HepG2 (cell line): ENCODE measurements at regions of chr3 and their contacts with region 1.

Region 1: DNA sequence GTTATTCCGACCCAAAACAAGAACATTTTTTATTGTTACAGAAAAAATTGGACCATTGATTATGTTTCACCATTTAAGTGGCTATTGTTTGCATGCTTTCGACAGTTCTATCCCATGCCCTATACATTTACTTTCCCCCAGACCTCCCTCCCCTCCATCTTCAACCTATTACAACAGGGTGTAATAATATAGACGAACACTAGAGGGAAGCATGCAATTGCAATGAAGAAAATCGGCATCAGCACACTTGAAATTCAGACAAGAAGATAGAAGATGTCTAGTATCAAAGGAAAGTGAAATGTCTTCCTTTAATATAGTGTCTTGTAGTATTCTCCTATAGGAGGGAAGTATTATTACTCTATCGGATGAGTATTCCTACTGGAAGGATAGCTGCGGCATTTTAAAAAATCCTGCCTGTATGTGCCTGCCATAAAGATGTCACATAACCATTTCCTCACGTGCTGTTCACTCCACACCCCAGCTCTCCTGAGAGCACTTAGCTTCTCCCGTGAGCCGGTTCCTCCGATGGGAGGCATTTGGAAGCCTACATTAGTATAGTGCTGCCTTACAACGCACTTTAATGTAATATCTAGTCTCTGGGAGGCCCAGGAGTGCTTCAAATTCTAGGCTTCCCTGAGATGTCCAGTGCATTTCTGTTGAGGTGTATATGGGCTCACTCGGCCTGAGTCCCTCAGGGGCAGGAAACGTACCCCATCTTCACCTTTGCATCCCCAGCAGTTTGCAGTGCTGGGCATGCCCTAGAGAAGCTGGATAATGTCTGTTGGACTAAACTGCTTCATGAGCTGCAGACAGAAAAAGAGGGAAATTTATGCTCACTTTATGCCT is 17.8 kb upstream of the ERICH6 start:
- DNase-seq: peak; percentile 67
- ATAC-seq: peak; percentile 79
- H3K4me3 ChIP-seq: no peak overlapping the region
- H3K27ac ChIP-seq: peak overlapping the region; percentile 28
- H3K4me1 ChIP-seq: peaks cover 42% of the 10 kb centered on the region
- H3K27me3 ChIP-seq: no peaks in the 10 kb centered on the region
- CTCF ChIP-seq: peak; percentile 91
- EP300 ChIP-seq: no peak
- POLR2A ChIP-seq: no peak
- RAD21 ChIP-seq: peak; percentile 86

Region 2: DNA sequence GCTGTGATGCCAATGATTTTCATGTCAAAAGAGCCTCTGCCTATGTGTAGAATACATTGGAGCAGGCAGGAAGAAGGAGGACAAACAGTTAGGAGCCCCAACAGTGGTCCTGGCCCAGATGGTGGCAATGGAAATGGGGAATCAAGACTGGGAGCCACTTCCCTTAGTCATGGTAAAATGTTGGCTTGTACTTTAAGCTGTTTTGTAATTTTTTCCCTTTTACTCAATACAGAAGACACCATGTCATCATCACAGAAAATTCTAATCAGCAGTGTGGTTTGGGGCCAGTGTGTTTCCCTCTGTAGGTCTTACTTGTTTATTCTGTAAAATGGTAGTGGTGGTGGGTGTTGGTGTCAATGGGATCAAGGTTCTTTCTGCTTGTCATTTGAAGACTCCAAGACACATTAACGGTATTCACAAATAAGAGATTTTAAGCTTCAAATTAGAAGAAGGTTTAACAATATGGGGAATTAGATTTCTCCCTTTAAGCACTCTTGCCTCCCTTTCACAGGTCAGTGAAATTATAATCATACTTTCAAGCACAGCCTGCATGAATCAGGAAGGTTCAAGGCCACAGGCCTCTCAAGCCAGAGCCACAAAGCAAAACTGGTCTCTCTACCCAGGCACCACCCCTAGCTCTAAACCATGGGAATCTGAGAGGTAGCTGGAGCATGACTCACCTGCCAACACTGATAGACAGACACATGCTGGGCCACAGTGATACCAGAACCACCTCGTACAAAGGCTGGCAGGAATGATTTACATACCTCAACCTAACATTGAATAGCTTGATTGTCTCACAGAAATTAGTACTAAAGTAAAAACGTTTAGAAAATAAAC is 16.6 kb after region 1 on chr3:
- CTCF ChIA-PET with region 1: no interaction called
- POLR2A ChIA-PET with region 1: interaction called, 6 read pairs
- in situ Hi-C with region 1: no loop called
- intact Hi-C with region 1: loop called (anchors 1 kb)
- DNase-seq: peak; percentile 96
- ATAC-seq: peak; percentile 73
- H3K4me3 ChIP-seq: peak overlapping the region in 1 of 3 experiments; percentile 38; a peak in 1 of 6 replicates
- H3K27ac ChIP-seq: peak overlapping the region; percentile 99
- H3K4me1 ChIP-seq: peaks cover 100% of the 10 kb centered on the region
- H3K27me3 ChIP-seq: no peaks in the 10 kb centered on the region
- CTCF ChIP-seq: no peak
- EP300 ChIP-seq: peak; percentile 41 to 90; a peak in 3 of 4 replicates
- POLR2A ChIP-seq: no peak; a peak in 1 of 4 replicates
- RAD21 ChIP-seq: 0 out of 2 replicates have a peak, but pooled peaks have one; percentile 12

Region 3: DNA sequence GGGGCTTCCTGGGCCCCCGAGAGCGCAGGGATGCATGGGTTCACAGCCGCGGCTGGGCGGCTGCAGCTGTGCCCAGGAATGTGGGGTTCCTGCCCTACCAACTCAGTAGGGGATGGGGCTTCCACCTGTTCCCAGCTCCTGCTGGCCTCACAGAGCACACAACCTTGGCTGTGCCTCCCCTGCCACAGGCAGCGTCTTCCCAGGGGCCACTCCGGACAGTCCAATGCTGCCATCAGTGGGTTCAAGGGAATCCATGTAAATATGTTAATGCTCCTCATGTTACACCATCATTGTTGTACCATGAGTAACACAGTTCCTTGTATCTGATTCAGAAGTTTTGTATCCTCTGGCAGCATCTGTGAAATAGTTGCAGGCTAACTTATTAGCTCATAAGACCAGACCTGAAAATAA is 53.6 kb after region 1 on chr3:
- CTCF ChIA-PET with region 1: interaction called, 21 read pairs
- POLR2A ChIA-PET with region 1: interaction called, 8 read pairs
- in situ Hi-C with region 1: loop called (anchors 10 kb)
- intact Hi-C with region 1: loop called (anchors 1 kb)
- DNase-seq: no peak
- ATAC-seq: no peak
- H3K4me3 ChIP-seq: no peak overlapping the region
- H3K27ac ChIP-seq: no peak overlapping the region
- H3K4me1 ChIP-seq: peaks cover 42% of the 10 kb centered on the region
- H3K27me3 ChIP-seq: no peaks in the 10 kb centered on the region
- CTCF ChIP-seq: no peak
- EP300 ChIP-seq: no peak
- POLR2A ChIP-seq: no peak
- RAD21 ChIP-seq: no peak

Region 4: DNA sequence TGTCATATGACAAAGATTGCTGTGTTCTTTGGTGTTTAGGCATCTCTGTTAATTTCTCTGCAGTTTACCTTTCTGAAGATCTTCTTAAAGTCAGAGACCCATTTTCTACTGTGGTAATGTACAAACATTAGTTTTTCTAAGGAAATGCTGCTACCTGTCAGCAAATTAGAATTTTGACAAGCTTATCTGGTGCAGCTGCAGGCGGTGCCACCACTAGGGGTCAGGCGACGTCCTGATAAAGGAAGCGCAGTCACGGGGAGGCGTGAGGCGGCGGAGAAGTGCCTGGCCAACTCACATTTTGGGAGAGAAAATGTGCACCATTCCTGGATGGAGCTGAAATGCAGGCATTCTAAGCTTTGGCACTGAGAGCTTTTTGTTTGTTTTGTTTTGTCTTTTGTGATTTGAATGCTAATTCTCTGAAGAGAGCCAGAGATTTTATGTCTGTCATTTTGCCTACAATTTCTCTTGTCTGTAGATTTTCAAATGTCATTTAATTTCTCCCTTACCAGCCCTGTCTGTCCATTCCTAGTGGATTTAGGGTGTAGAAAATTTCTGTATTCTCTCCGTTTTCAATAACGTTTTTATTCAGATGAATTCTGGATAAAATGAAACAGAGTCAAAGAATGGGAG is 66.3 kb after region 1 on chr3:
- CTCF ChIA-PET with region 1: interaction called, 7 read pairs
- POLR2A ChIA-PET with region 1: no interaction called
- in situ Hi-C with region 1: no loop called
- intact Hi-C with region 1: loop called (anchors 2 kb)
- DNase-seq: peak; percentile 53
- ATAC-seq: peak; percentile 95
- H3K4me3 ChIP-seq: no peak overlapping the region
- H3K27ac ChIP-seq: no peak overlapping the region
- H3K4me1 ChIP-seq: peaks cover 7% of the 10 kb centered on the region; the same call in 1 of the 2 replicates
- H3K27me3 ChIP-seq: peaks cover 2 to 10% of the 10 kb centered on the region in 2 experiments; a peak in 2 of 5 replicates
- CTCF ChIP-seq: peak; percentile 94
- EP300 ChIP-seq: no peak
- POLR2A ChIP-seq: no peak
- RAD21 ChIP-seq: peak; percentile 78

Region 5: GRCh38 chr3:150830094-150830681 is 108.7 kb after region 1 on chr3:
- CTCF ChIA-PET with region 1: interaction called, 11 read pairs
- POLR2A ChIA-PET with region 1: no interaction called
- in situ Hi-C with region 1: no loop called
- intact Hi-C with region 1: loop called (anchors 1 kb)
- DNase-seq: peak; percentile 41
- ATAC-seq: peak; percentile 96
- H3K4me3 ChIP-seq: no peak overlapping the region; a peak in 1 of 6 replicates
- H3K27ac ChIP-seq: no peak overlapping the region
- H3K4me1 ChIP-seq: peaks cover 15% of the 10 kb centered on the region; the same call in 1 of the 2 replicates
- H3K27me3 ChIP-seq: peaks cover 0 to 1% of the 10 kb centered on the region in 2 experiments; a peak in 2 of 5 replicates
- CTCF ChIP-seq: peak; percentile 57
- EP300 ChIP-seq: no peak
- POLR2A ChIP-seq: no peak
- RAD21 ChIP-seq: peak; percentile 43

Region 6: DNA sequence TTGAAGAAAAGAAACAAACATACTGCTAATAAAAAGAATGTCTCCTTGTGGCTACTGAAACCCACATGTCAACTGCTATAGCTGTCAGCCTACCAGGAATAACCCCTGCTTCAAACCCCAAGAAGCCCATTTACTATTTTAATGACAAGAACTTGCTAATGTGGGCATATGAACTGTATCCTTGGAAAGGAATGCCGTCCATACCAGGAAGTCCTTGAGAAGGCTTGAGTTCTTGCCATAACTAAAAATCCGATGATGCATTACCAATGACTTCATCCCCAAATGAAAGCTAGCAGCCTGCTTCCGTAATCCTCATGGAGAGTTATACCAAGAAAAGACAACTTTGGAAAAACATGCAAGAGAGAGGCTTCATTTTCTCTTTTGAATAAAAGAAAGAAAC is 148.9 kb after region 1 on chr3:
- CTCF ChIA-PET with region 1: interaction called, 14 read pairs
- POLR2A ChIA-PET with region 1: no interaction called
- in situ Hi-C with region 1: loop called (anchors 10 kb)
- intact Hi-C with region 1: loop called (anchors 1 kb)
- DNase-seq: no peak
- ATAC-seq: no peak
- H3K4me3 ChIP-seq: no peak overlapping the region
- H3K27ac ChIP-seq: no peak overlapping the region
- H3K4me1 ChIP-seq: no peaks in the 10 kb centered on the region
- H3K27me3 ChIP-seq: peaks cover 0 to 13% of the 10 kb centered on the region in 2 experiments; a peak in 2 of 5 replicates
- CTCF ChIP-seq: no peak
- EP300 ChIP-seq: no peak
- POLR2A ChIP-seq: no peak
- RAD21 ChIP-seq: no peak